ENCODE measurements at regions of chr1 and their contacts with region 1.

Region 1: DNA sequence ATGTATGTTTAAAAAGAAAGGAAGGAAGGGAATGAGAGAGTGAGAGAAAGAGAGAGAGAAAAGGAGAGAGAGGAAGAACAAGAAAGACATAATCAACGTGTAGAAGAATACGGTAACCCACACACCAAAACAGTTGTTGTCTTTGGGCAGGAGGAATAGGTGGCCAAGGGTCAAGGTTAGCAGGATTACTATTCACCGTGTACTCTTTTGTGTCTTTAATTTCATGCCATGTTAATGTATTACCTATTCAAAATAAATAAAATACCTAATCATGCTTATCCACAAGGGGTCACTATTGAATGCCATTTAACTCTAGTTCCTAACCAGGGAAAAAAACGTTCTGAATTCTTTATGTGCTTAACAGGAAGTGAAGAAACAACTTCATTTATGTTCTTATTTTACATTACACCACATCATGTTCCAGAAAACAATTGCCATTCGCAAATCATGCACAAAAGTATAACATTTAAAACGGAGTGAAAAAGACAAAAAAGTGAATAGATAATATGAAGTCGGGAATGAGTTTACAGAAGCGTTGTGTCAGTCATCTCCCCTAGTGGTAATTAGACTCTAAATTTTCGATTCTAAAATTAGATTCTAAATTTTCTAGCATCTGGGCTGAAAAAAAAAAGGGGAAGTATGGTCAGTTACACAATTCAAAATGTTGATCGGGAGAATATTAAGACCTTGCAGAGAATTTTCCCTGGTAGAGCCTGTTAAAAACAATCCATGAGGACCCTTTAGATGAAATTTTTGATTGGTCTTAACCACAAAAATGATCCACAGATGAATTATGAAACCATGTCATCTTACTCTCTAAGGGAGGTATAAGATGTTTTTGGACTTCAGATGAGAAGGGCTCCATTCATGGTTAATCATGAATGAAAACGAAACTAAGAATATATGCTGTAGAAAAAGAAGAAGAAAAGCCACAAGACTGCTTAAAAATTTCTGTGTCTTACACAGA is 700 bp upstream of the KMO start:
- DNase-seq: no peak
- ATAC-seq: peak; percentile 87 to 88

Region 2: DNA sequence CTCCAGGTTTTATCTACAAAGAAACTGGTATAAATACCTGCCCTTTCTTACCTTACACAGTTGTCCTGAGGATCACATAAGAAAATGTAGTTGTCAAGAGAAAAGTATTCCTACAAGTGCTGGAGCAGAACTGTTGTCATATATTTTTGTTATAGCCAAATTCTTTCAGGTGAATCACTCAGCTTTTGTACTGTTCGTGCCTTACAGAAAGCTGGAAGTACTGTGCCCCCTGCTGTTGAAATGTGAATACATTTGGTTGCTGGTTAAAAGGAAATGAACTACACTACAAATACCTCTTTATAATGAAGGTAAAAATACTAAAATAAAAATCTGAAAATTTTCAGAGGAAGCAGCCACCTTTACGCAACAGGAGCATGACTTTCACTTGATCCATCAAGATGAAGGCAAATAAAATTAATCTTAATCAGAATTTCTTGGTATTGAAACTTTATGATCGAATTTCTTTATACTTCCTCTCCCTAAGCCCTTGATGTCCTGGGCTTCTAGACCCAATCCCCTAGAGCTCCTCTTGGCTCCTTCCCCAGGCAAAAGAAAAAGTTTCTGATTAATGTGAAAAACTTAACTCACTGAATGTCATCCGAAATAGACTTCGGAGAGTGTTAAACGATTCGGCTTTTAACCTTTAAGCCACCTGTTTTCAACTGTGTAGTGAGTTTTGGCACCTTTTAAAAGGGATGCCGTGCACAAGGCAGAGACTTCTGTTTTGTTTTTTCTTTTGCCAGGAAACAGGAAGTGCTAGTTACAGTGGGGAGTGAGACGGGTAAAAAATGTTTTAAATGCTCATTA is 96.2 kb after region 1 on chr1:
- intact Hi-C with region 1: loop called (anchors 5 to 10 kb)
- DNase-seq: no peak
- ATAC-seq: peak in 1 of 2 donors; percentile 59

Measured in left cardiac atrium (tissue), 4 donors.